Posterior cingulate gyrus (tissue), 11 donors: ENCODE measurements at regions of chr16 and their contacts with region 1.

Region 1: GRCh38 chr16:1863681-1864460 is 8.1 kb downstream of the MEIOB start:
- DNase-seq: no peak

Region 2: GRCh38 chr16:1705688-1706385 is 158.0 kb before region 1 on chr16 and contains the start of gene MAPK8IP3:
- intact Hi-C with region 1: no loop called
- DNase-seq: peak; percentile 86 to 99 (median 90)

Region 3: DNA sequence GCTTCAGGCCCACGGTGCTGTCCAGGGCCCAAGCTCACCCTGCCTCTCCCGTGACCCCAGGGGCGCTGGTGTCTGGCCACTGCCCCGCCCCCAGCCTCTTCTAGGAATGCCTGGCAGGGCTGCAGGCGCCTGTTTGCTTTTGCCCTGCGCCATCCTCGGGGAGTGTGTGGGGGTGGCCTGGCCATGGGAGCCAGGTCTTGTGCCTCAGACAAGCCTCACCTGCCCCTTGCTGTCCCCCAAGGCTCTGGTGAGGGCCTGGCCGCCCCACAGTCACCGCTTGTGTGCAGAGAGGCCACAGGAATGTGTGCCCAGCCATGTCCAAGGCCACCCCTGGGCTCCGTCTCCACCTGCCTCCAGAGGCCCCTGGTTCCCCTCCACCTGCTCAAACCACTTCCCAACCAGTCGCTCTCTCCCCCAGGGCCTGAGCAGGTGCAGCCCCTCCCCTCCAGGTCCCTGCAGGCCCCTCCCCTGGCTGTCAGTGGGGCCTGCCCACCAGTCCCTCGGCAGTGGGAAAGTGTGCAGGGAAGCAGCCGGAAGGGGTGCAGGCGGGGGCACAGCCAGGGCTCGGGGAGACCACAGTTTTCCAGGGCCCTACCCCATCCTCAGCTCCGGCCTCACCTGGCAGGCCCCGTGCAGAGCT is 69.5 kb before region 1 on chr16:
- intact Hi-C with region 1: no loop called
- DNase-seq: peak in 2 of 10 donors; percentile 9 to 77

Region 4: DNA sequence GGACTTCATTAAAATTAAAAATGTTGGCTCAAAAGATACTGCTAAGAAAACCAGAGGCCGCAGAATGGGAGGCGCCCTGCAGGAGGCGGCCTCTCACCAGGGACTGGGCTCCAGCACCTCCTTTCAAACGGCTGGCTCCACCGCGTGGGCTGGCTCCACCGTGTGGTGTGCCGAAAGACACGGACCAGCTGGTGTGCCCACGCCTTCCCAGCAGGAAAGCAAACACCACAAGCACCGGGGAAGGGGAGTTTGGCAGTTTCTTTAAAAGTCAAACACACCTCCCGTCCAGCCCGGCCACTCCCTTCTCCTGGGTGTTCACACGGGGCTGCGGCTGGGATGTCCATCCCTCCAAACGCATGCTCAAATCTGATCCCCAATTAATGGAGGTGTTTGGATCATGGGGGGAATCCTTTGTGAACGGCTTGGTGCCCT is 51.1 kb before region 1 on chr16:
- intact Hi-C with region 1: no loop called
- DNase-seq: peak; percentile 34 to 96 (median 79)

Region 5: GRCh38 chr16:1929578-1930337 is 65.9 kb after region 1 on chr16:
- intact Hi-C with region 1: loop called (anchors 1 kb)
- DNase-seq: peak; percentile 78 to 98 (median 86)